Naive thymus-derived CD8-positive, alpha-beta T cell (primary cell): ENCODE measurements at regions of chr7 and their contacts with region 1.

Region 1: DNA sequence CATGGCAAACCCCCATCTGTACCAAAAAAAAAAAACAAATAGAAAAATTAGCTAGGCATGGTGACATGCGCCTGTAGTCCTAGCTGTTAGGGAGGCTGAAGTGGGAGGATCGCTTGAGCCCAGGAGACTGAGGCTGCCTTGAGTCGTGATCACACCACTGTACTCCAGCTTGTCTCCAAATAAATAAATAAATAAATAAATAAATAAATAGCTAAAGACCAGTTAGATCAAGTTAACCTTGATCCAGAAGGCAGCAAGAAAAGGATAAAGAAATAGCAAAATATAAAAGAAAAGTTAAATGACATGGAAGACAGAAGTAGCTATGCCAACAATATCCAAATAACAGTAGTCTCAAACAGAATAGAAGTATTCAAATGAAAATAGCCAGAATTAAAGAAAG is 132.2 kb upstream of the SH2B2 start:
- DNase-seq: no peak
- ATAC-seq: no peak
- H3K4me3 Mint-ChIP-seq: no peak overlapping the region
- H3K27ac Mint-ChIP-seq: no peak overlapping the region
- H3K4me1 Mint-ChIP-seq: peaks cover 0 to 2% (median 0%) of the 10 kb centered on the region in 4 donors
- H3K27me3 Mint-ChIP-seq: no peaks in the 10 kb centered on the region

Region 2: GRCh38 chr7:101856473-101857357 is 297.7 kb before region 1 on chr7:
- POLR2A ChIA-PET with region 1: interaction called, 10 read pairs
- DNase-seq: peak; percentile 58 to 88 (median 78)
- ATAC-seq: peak; percentile 95 to 98
- H3K4me3 Mint-ChIP-seq: peak overlapping the region; percentile 94 to 99 (median 97)
- H3K27ac Mint-ChIP-seq: peak overlapping the region; percentile 88 to 99 (median 98)
- H3K4me1 Mint-ChIP-seq: peaks cover 28 to 64% (median 59%) of the 10 kb centered on the region in 4 donors
- H3K27me3 Mint-ChIP-seq: no peaks in the 10 kb centered on the region